PC-9 (cell line): ENCODE measurements at regions of chr1 and their contacts with region 1.

Region 1: GRCh38 chr1:169538998-169539871 is 47.0 kb downstream of the F5 start:
- DNase-seq: peak; percentile 46 to 84
- H3K4me3 ChIP-seq: no peak overlapping the region
- H3K27ac ChIP-seq: peak overlapping the region; percentile 11; the same call in 1 of the 2 replicates
- H3K4me1 ChIP-seq: peaks cover 18% of the 10 kb centered on the region
- H3K27me3 ChIP-seq: no peaks in the 10 kb centered on the region
- CTCF ChIP-seq: no peak

Region 2: GRCh38 chr1:169529068-169529696 is 10.1 kb before region 1 on chr1:
- CTCF ChIA-PET with region 1: no interaction called
- POLR2A ChIA-PET with region 1: no interaction called
- intact Hi-C with region 1: loop called (anchors 1 kb)
- DNase-seq: peak; percentile 76 to 97
- H3K4me3 ChIP-seq: peak overlapping the region; percentile 41; the same call in 1 of the 2 replicates
- H3K27ac ChIP-seq: peak overlapping the region; percentile 89
- H3K4me1 ChIP-seq: peaks cover 41% of the 10 kb centered on the region
- H3K27me3 ChIP-seq: no peaks in the 10 kb centered on the region
- CTCF ChIP-seq: no peak

Region 3: GRCh38 chr1:169648709-169649108 is 109.5 kb after region 1 on chr1:
- CTCF ChIA-PET with region 1: no interaction called
- POLR2A ChIA-PET with region 1: no interaction called
- intact Hi-C with region 1: no loop called
- DNase-seq: no peak
- H3K4me3 ChIP-seq: no peak overlapping the region
- H3K27ac ChIP-seq: no peak overlapping the region
- H3K4me1 ChIP-seq: no peaks in the 10 kb centered on the region
- H3K27me3 ChIP-seq: no peaks in the 10 kb centered on the region
- CTCF ChIP-seq: no peak